ENCODE measurements at regions of chr12 and their contacts with region 1.

Region 1: DNA sequence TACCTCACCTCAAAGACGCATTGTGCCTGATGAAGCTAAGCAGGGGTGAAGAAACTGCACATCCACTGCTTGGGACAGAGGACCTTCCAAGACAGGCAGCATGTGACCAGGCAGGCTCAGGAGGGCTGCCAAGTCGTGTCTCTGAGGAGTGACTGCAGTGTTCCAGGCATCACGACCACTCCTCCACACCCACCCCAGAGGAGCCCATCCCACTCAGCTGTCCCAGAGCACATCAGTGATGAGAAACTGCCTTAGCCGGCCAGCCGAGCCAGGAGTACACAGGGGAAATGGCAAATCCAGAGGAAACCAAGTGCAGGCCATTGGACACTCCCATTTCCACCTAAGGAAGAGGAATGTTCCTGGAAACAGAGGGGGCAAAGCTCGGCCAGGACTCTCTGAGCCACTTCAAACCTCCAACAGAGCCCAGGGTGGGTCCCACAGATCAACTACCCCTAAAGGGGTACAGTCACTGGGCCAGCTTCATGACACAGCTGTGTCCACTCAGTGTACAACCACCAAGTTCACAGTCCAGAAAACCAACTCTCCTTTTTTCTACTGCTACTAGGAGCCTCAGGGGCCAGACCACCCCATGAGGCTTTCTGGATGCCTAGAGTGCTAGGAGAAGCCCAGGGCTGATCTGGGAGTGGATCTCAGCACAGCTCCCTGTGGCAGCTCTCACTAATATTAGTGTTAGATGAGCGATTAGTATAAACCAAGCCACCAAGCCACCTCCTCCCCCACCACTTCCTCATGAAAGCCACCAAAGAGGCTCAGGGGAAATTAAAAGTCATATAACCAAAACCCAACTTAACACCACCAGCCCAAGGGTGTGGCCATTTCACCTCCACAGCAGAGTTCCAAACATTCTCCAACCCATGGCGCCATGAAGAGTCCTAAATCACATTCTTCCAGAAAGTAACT is 15.4 kb downstream of the PXN start:
- DNase-seq: peak; percentile 64
- H3K4me3 Mint-ChIP-seq: peak overlapping the region; percentile 39
- H3K27ac Mint-ChIP-seq: peak overlapping the region; percentile 81
- H3K4me1 Mint-ChIP-seq: peaks cover 78% of the 10 kb centered on the region
- H3K27me3 Mint-ChIP-seq: no peaks in the 10 kb centered on the region

Region 2: GRCh38 chr12:120194534-120195395 is 55.4 kb before region 1 on chr12 and contains the start of gene GCN1:
- CTCF ChIA-PET with region 1: no interaction called
- POLR2A ChIA-PET with region 1: interaction called, 10 read pairs
- intact Hi-C with region 1: no loop called
- DNase-seq: peak; percentile 91
- H3K4me3 Mint-ChIP-seq: peak within 1 kb of the TSS; percentile 91
- H3K27ac Mint-ChIP-seq: peak within 1 kb of the TSS; percentile 98
- H3K4me1 Mint-ChIP-seq: peaks cover 51% of the 10 kb centered on the region
- H3K27me3 Mint-ChIP-seq: no peaks in the 10 kb centered on the region
- total RNA-seq, gene GCN1: 121 TPM